CD8-positive, alpha-beta memory T cell (primary cell): ENCODE measurements at regions of chr2 and their contacts with region 1.

Region 1: DNA sequence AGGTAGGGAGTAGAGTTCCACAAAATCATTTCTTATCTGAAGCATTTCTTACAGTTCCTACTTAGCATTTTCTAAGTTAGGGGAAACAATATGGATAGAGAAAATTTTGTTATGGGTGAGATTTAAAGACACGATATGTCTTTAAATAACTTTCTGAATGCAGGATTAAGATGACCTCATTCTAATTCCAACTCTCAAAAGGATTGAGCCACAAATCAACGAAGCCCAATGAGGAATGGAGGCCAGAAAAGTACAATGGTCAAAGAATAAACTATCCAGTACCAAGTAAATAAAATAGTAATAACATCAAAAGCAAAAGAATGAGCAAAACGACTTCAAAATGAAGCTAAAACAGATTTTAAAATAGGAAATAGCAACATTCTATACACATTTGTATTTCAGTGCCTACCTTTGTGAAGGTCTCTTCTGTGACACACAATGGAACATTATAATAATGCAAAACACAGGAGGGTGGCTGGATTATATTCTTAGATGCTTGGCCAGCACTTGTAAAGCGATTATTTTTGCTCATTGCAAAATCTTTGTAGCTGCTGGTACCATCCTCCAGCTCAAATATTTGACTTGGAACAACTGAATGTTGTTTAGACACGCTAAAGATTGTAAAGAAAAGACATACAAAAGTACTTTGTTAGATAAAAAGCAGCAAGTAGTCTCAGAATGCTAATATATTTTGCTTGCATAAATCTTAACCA is 33.8 kb downstream of the HNRNPLL start:
- DNase-seq: no peak
- H3K4me3 ChIP-seq: no peak overlapping the region
- H3K4me3 Mint-ChIP-seq: no peak overlapping the region
- H3K27ac ChIP-seq: no peak overlapping the region
- H3K27ac Mint-ChIP-seq: peak overlapping the region in 1 of 8 donors; percentile 10
- H3K4me1 ChIP-seq: no peaks in the 10 kb centered on the region
- H3K4me1 Mint-ChIP-seq: peaks cover 11 to 28% (median 27%) of the 10 kb centered on the region in 3 donors
- H3K27me3 ChIP-seq: no peaks in the 10 kb centered on the region
- H3K27me3 Mint-ChIP-seq: no peaks in the 10 kb centered on the region

Region 2: DNA sequence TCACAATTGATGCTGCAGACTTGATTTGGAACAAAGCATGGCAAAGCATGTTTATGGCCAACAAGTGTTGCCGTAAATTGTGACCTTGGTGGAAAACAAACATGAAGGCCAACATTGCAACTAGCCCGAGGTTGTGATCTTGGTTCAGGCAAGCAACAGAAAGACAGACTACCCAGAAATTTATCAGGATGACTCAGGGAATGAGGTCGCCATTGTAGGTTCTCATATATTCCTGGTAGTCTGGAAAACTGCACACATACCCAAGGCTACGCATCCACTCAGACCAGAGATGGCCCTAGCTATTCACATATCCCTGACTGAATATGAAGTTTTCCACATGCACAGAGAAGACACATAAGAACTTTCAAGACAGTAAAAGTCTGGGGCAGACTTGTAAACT is 523.1 kb before region 1 on chr2:
- CTCF ChIA-PET with region 1: no interaction called
- POLR2A ChIA-PET with region 1: interaction called, 13 read pairs
- DNase-seq: no peak
- H3K4me3 ChIP-seq: no peak overlapping the region
- H3K4me3 Mint-ChIP-seq: no peak overlapping the region
- H3K27ac ChIP-seq: no peak overlapping the region
- H3K27ac Mint-ChIP-seq: no peak overlapping the region
- H3K4me1 ChIP-seq: no peaks in the 10 kb centered on the region
- H3K4me1 Mint-ChIP-seq: no peaks in the 10 kb centered on the region
- H3K27me3 ChIP-seq: no peaks in the 10 kb centered on the region
- H3K27me3 Mint-ChIP-seq: peaks cover 12 to 49% of the 10 kb centered on the region in 2 donors